Endothelial cell of umbilical vein (primary cell): ENCODE measurements at regions of chr3 and their contacts with region 1.

Region 1: DNA sequence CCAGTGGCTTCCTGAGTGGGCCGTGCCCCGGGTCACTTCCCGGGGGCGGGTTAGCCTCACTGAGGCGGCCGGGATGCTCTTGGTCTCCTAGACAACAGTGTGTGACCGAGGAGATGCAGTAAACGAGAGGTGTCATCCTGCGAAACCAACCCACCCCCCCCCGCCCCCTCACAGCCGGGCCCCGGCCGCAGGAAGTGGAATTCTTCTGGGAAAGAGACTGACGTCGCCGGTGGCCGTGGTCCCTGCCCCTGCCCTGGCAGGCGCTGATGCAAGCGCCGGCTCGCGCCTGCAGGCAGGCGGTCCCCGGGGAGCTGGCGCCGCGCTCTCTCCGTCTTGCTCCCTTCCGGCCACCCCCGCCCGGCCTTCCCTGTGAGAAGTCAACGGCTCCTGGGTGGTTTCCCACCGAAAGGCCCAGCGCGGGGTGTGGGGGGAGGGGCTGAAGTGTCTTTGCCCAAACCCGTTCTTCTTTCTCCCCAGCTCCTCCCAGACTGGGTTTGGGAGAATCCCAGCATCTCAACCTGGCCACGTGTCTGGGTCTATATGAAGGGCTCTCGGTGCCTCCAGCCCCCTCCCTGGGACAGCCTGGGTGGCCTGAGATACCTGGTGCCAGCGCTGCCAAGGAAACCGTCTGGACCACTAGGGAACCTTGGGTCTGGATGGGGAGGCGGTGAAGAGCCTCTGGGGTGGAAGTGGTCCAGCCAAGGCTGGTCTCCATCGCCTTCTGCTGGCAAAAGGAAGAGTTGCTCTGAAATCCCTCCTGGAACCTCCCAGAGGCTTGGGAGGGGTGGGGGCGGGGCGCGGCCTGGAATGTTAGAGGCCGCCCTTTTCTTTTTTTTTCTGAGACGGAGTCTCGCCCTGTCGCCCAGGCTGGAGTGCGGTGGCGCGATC is 47.3 kb downstream of the BHLHE40 start:
- DNase-seq: peak; percentile 93
- H3K4me3 ChIP-seq: peak overlapping the region in 2 of 3 experiments; percentile 29 to 48
- H3K27ac ChIP-seq: peak overlapping the region; percentile 97
- H3K4me1 ChIP-seq: peaks cover 29% of the 10 kb centered on the region
- H3K27me3 ChIP-seq: no peaks in the 10 kb centered on the region
- CTCF ChIP-seq: peak; percentile 62 to 85
- POLR2A ChIP-seq: no peak

Region 2: DNA sequence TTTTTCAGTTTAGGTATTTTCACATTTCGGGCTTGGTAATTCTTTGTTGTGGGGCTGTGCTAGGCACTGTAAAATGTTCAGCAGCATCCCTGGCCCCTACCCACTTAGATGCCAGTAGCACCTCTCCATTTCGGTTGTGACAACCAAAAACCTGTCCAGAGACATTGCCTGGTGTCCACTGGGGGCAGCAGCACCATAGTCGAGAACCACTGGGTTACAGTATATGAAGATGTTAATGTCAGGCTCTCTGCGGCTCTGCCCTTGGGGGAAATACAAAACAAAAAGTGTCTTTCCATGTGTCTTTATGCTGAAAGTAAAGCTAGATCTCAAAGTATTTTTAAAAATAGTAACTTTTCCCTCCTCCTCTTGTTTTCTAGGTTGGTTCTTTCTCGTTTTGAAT is 356.2 kb before region 1 on chr3:
- CTCF ChIA-PET with region 1: no interaction called
- POLR2A ChIA-PET with region 1: no interaction called
- dilution Hi-C with region 1: no loop called
- intact Hi-C with region 1: no loop called
- DNase-seq: no peak
- H3K4me3 ChIP-seq: no peak overlapping the region
- H3K27ac ChIP-seq: no peak overlapping the region
- H3K4me1 ChIP-seq: no peaks in the 10 kb centered on the region
- H3K27me3 ChIP-seq: no peaks in the 10 kb centered on the region
- CTCF ChIP-seq: peak; percentile 33 to 38
- POLR2A ChIP-seq: no peak

Region 3: DNA sequence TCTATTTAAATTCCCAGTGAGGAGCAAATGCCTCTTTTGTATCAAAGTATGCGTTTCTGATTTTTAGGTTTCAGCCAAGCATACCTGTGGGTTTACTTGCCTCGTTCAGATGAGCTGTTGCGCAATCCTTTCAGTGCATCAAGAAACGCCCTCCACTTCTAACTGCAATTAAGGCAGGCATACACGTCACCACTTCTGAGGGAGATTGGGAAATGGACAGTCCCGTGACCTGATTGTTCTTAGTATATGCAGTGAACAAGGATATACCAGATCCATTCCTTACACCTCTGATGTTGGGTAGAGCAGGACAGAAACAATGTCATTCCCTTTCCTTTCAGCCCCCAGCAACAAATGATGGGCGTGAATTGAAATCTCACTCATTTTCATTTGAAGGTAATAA is 314.4 kb before region 1 on chr3:
- CTCF ChIA-PET with region 1: interaction called, 94 read pairs
- POLR2A ChIA-PET with region 1: no interaction called
- dilution Hi-C with region 1: no loop called
- intact Hi-C with region 1: loop called (anchors 1 kb)
- DNase-seq: no peak
- H3K4me3 ChIP-seq: no peak overlapping the region
- H3K27ac ChIP-seq: no peak overlapping the region
- H3K4me1 ChIP-seq: peaks cover 15% of the 10 kb centered on the region
- H3K27me3 ChIP-seq: no peaks in the 10 kb centered on the region
- CTCF ChIP-seq: no peak
- POLR2A ChIP-seq: no peak

Region 4: DNA sequence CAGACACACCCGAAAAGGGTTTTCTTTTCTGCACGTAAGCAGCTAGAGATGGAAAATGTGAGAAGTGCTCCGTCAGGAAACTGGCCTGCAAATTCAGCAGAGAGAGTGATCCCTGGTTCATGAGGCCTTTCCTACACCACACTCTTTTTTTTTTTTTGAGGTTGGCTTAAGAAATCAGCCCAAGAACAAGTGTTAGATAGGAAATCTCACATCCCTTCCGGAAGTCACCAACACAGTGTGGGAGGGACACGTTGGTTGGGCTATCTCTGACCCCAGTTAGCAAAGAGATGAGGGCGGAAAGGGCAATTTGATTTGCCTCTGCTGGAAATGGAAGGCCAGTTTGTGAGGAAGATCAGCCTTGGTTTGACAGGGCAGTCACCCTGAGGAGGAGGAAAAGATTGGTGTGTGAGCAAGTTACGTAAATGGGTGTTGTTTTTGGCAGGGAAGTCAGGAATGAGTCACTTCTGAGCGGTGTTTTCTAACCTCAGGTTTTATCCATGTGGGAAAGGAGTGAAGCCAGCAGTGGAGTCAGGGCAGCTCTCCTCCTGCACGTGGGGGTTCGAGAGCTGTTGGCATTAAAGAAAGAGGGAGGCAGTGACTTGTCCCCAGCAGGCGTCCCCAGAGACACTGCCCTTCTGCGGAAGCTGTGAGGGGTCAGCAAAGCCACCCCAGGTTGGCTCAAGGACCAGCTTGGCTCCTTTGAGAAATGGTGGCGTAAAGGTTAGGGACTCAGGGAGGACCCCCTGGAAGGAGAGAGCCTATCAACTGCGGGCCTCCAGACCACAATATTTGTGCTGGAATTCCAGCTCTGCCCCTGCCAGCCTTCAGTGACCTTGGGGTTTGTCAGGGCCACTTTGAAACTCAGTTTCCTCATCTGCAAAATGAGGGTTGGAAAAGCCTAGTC is 284.9 kb before region 1 on chr3:
- CTCF ChIA-PET with region 1: interaction called, 5 read pairs
- POLR2A ChIA-PET with region 1: no interaction called
- dilution Hi-C with region 1: no loop called
- intact Hi-C with region 1: loop called (anchors 1 kb)
- DNase-seq: peak; percentile 99
- H3K4me3 ChIP-seq: peak overlapping the region in 1 of 3 experiments; percentile 10
- H3K27ac ChIP-seq: peak overlapping the region; percentile 99
- H3K4me1 ChIP-seq: peaks cover 28% of the 10 kb centered on the region
- H3K27me3 ChIP-seq: no peaks in the 10 kb centered on the region
- CTCF ChIP-seq: no peak
- POLR2A ChIP-seq: peak; percentile 41

Region 5: DNA sequence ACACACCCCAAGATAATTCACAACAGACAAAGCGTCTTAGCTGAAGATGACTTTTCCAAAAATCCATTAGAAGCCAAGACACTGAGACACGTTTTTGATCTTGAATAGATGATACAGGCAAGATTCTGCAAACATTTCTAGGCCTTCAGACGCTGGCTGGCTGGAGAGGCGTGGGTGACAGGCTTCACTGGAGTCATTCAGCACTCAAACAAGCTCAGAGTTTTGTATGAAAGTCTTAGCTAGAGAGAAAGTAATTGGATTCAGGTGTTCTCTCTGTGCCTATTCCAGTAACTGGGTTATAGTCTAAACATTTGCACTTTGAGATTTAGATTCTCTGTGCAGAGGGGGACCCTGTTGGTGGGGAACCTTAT is 195.0 kb before region 1 on chr3:
- CTCF ChIA-PET with region 1: interaction called, 3 read pairs
- POLR2A ChIA-PET with region 1: no interaction called
- dilution Hi-C with region 1: no loop called
- intact Hi-C with region 1: loop called (anchors 1 kb)
- DNase-seq: no peak
- H3K4me3 ChIP-seq: no peak overlapping the region
- H3K27ac ChIP-seq: peak overlapping the region; percentile 97
- H3K4me1 ChIP-seq: peaks cover 19% of the 10 kb centered on the region
- H3K27me3 ChIP-seq: no peaks in the 10 kb centered on the region
- CTCF ChIP-seq: no peak
- POLR2A ChIP-seq: peak; percentile 3

Region 6: DNA sequence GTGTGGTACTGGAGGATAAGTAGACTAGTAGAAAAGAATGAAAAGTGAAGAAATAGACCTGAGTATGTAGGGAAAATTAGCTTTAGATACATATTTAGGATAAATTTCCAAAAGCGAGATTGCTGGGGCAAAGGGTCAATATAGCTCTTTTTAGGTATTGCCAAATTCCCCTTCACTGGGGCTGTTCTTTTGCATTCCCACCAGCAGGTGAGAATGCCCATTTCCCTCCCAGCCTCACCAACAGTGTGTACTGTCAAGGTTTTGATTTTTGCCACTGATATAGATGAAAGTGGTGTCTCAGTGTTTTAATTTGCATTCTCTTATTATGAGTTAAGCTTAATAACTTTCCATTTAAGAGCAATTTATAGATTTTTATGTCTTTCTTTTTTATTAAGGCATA is 83.0 kb before region 1 on chr3:
- CTCF ChIA-PET with region 1: no interaction called
- POLR2A ChIA-PET with region 1: no interaction called
- dilution Hi-C with region 1: no loop called
- intact Hi-C with region 1: no loop called
- DNase-seq: no peak
- H3K4me3 ChIP-seq: no peak overlapping the region
- H3K27ac ChIP-seq: no peak overlapping the region
- H3K4me1 ChIP-seq: peaks cover 4% of the 10 kb centered on the region
- H3K27me3 ChIP-seq: no peaks in the 10 kb centered on the region
- CTCF ChIP-seq: peak; percentile 7 to 11
- POLR2A ChIP-seq: no peak

Region 7: GRCh38 chr3:4986782-4987537 is 39.6 kb before region 1 on chr3:
- CTCF ChIA-PET with region 1: interaction called, 327 read pairs
- POLR2A ChIA-PET with region 1: interaction called, 46 read pairs
- dilution Hi-C with region 1: no loop called
- intact Hi-C with region 1: loop called (anchors 1 kb)
- DNase-seq: peak; percentile 97
- H3K4me3 ChIP-seq: peak overlapping the region in 2 of 3 experiments; percentile 1 to 25
- H3K27ac ChIP-seq: peak overlapping the region; percentile 100
- H3K4me1 ChIP-seq: peaks cover 56% of the 10 kb centered on the region
- H3K27me3 ChIP-seq: no peaks in the 10 kb centered on the region
- CTCF ChIP-seq: no peak
- POLR2A ChIP-seq: no peak

Region 8: DNA sequence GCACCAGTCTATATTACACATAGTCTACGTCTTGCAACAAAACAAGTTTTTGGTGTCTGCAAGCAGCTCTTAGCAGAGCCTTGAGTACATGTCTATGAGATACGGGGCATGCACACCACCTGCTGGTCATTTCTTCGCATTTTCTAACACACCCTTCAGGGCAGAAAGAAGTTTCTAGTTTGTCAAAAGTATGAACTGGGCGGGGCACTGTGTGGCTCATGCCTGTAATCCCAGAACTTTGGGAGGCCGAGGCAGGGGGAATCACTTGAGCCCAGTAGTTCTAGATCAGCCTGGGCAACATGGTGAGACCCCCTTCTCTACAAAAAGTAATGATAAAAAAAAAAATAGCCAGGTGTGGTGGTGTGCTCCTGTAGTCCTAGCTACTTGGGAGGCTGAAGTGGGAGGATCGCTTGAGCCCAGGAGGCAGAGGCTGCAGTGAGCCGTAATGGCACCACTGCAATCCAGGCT is 31.3 kb after region 1 on chr3:
- CTCF ChIA-PET with region 1: interaction called, 11 read pairs
- POLR2A ChIA-PET with region 1: no interaction called
- dilution Hi-C with region 1: no loop called
- intact Hi-C with region 1: loop called (anchors 2 kb)
- DNase-seq: peak; percentile 85
- H3K4me3 ChIP-seq: no peak overlapping the region
- H3K27ac ChIP-seq: no peak overlapping the region
- H3K4me1 ChIP-seq: no peaks in the 10 kb centered on the region
- H3K27me3 ChIP-seq: peaks cover 0 to 2% of the 10 kb centered on the region in 2 experiments
- CTCF ChIP-seq: peak; percentile 59 to 65
- POLR2A ChIP-seq: no peak

Region 9: DNA sequence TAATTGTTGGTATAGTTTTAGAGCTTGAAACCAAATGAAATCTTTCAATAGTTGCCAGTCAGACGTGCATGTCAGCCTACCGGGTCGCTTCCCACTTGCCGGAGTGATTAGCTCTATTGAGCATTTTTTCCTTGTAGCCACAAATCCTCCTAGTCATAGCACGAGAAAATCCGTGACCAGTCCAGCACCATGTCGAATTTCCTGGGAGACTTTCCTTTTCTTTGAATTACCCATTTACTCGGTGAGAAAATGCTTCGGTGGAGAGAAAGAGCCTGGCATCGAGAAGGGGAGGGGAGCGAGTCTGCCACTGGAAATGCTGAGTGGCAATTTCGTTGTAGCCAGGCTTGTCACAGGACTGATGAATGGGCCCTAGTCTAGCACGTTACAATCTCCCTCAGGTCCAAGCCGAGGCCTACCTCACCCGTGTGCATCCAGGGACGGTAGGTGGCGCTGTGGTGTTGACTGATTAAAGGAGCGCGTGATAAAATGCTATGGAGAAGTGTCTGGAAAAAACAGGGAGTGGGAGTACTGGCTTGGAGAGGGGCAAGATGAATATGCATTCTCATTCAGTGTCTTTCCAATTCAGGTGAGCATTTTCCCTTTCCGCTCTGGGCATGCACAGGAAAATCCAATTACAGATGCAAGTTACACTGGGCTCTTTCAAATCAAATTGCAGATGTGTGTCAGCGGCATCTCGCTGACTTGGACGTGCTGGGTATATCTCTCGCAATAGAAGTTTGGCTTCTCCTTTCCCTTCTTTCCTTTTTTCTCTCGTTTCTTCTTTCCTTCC is 399.7 kb after region 1 on chr3:
- CTCF ChIA-PET with region 1: no interaction called
- POLR2A ChIA-PET with region 1: no interaction called
- dilution Hi-C with region 1: no loop called
- intact Hi-C with region 1: no loop called
- DNase-seq: peak; percentile 45
- H3K4me3 ChIP-seq: no peak overlapping the region
- H3K27ac ChIP-seq: no peak overlapping the region
- H3K4me1 ChIP-seq: no peaks in the 10 kb centered on the region
- H3K27me3 ChIP-seq: no peaks in the 10 kb centered on the region
- CTCF ChIP-seq: peak; percentile 78 to 85
- POLR2A ChIP-seq: no peak